Ovary (tissue), 10 donors: ENCODE measurements at regions of chrX and their contacts with region 1.

Region 1: GRCh38 chrX:6748595-6748994 is 213.7 kb upstream of the VCX3A start:
- DNase-seq: no peak
- H3K4me3 ChIP-seq: no peak overlapping the region
- H3K27ac ChIP-seq: no peak overlapping the region
- H3K4me1 ChIP-seq: no peaks in the 10 kb centered on the region
- H3K27me3 ChIP-seq: no peaks in the 10 kb centered on the region
- CTCF ChIP-seq: no peak
- EP300 ChIP-seq: no peak
- POLR2A ChIP-seq: no peak

Region 2: GRCh38 chrX:7090641-7091040 is 342.0 kb after region 1 on chrX:
- intact Hi-C with region 1: loop called in 1 of 4 experiments (anchors 5 kb)
- DNase-seq: no peak
- H3K4me3 ChIP-seq: no peak overlapping the region
- H3K27ac ChIP-seq: no peak overlapping the region
- H3K4me1 ChIP-seq: no peaks in the 10 kb centered on the region
- H3K27me3 ChIP-seq: no peaks in the 10 kb centered on the region
- CTCF ChIP-seq: no peak
- EP300 ChIP-seq: no peak
- POLR2A ChIP-seq: no peak

Region 3: DNA sequence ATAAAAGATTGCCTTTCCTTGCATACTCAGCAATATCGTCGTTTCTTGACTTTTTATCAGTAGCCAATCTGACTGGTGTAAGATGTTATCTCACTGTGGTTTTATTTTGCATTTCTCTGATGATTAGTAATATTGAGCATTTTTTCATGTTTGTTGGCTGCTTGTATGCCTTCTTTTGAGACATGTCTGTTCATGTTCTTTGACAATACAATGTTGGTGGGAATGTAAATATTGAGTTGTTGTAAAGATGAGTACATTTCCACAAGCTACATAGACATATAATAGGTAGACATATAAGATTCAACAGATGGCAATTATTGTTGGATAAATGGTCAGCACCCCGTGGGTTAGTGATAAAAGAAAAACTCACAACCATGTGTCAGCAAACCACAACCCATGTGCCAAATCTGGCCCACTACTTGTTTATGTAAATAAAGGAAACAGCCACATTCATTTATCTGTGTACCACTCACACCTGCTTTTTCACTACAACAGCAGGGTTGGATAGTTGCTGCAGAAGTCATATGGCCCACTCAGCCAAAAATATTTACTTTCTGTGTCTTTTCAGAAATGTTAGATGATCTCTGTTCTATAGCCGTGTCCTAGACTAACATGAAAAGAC is 941.3 kb after region 1 on chrX:
- intact Hi-C with region 1: no loop called
- DNase-seq: no peak
- H3K4me3 ChIP-seq: no peak overlapping the region
- H3K27ac ChIP-seq: no peak overlapping the region
- H3K4me1 ChIP-seq: no peaks in the 10 kb centered on the region
- H3K27me3 ChIP-seq: no peaks in the 10 kb centered on the region
- CTCF ChIP-seq: no peak
- EP300 ChIP-seq: no peak
- POLR2A ChIP-seq: no peak